AG04449 (cell line): ENCODE measurements at regions of chr14 and their contacts with region 1.

Region 1: GRCh38 chr14:69559581-69560011 is 15.1 kb downstream of the CCDC177 start:
- DNase-seq: no peak
- H3K4me3 ChIP-seq: no peak overlapping the region
- CTCF ChIP-seq: no peak

Region 2: DNA sequence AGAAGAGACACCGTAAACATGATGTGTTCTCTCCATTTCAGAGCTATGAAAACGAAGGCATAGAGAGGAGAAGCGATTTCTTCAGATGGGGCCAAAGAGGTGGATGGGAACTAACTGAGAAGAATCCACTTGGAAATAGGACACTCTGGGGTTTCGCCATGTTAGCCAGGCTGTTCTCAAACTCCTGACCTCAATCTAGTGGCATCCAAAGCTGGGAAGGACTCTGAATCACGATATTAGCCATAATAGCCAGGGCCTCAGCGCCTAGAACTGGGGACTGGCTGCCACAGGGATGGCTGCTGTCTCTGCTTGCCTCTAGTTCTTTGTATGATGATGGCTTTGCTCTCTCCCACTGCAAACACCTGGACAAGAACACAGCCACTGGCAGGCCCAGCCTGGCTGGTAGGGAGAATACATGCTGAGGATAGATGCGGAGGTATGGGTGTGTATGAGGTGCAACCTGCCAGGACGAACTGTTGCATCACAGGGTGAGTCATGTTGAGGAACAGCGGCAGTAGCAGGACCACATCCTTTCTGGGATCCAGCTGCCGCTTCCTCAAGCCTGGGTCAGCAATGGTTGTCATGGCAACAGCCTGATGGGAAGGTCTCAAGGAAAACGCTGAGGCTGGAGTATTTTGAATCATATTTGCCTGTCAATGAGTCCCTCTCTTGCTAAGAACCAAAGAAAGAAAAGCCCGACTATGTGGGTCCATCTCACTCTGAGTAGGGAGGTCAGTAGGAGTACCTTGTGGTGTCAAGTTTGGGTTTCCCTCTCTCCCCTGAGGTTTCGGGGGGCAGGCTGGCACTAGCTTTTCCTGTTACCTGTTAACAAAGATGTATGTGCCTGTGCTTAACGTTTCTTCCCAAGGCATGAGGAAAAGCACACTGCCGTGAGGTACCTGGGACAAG is 16.0 kb before region 1 on chr14:
- CTCF ChIA-PET with region 1: interaction called, 28 read pairs
- POLR2A ChIA-PET with region 1: no interaction called
- DNase-seq: no peak
- H3K4me3 ChIP-seq: no peak overlapping the region
- CTCF ChIP-seq: no peak